Right ventricle myocardium superior (tissue), 1 donor: ENCODE measurements at regions of chr7 and their contacts with region 1.

Region 1: GRCh38 chr7:35037526-35038339 is 448 bp upstream of the DPY19L1 start:
- DNase-seq: peak; percentile 98
- ATAC-seq: peak; percentile 92

Region 2: GRCh38 chr7:34558022-34558421 is 479.7 kb before region 1 on chr7:
- intact Hi-C with region 1: no loop called
- DNase-seq: no peak
- ATAC-seq: no peak

Region 3: DNA sequence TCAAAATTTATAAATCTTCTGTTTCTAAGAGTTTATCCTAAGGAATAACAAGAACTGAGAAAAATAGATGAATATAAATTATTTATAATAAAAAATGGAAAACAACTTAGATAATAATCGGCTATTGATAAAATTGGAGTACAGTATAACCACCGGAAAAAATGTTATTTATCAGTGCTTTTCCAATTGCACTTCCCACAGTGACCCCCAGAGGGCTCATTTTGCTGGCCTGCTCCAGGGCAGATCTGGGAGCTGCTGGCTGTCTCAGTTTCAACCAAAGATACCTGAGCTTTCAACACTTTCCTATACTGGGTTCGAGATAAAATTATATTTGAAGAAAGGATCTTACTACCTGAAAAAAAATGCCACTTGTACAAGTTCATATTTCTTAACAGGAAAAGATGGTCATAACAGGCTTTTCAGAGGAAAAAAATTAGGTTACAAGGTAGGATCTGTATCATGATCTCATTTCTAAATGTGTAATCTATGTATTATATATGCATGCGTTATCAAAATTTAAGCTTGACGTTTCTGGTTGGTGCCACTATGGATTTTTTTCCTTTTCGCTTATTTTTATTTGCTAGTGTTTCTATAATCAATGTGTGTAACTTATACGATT is 214.0 kb before region 1 on chr7:
- intact Hi-C with region 1: loop called (anchors 10 kb)
- DNase-seq: no peak
- ATAC-seq: peak; percentile 55